Mammary epithelial cell (primary cell): ENCODE measurements at regions of chr7 and their contacts with region 1.

Region 1: DNA sequence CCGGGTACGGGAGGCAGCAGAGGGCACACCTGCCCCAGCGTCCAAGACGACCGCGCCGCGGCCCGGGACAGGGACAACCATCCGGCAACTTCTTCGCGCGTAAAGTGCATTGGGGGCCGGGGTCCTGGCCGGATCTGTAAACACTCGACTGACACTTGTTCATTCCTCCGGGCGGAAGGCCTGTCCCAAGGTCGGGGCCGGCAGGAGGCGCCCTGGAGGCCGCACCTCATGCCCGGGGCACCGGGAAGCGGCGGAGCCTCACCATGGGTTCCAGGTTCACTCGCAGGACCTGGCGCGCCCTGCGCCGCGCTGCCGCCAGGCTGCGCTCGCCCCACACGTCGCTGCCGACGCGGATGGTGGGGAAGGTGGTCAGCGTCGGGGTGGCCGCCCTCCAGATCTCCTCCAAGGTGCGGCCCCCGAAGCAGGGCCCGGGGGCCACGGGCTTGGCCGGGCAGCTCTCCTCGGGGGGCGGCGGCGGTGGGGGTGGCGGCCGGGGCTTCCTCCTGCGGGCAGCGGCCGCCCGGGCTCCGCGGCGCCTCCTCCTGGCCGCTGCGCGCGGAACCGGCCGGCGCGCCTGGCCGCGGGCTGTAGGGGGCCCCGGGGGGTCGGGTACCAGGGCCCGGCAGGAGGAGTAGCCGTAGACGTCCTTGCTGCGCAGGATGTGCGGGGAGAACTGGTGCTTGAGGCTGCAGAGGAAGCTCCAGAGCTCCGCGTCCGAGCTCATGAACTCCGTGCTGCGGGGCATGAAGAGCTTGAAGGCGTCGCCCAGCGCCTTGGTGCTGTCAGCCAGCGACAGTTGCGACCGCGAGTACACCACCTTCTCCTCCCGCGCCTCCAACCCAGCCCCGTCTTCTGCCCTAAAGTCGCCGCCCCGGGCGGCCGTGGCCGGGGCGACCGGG is 746 bp downstream of the CCDC71L start:
- DNase-seq: peak; percentile 74
- H3K4me3 ChIP-seq: peak overlapping the region; percentile 74 to 99 (median 90)
- H3K27ac ChIP-seq: peak overlapping the region; percentile 81
- H3K4me1 ChIP-seq: peaks cover 6% of the 10 kb centered on the region
- H3K27me3 ChIP-seq: no peaks in the 10 kb centered on the region
- CTCF ChIP-seq: peak; percentile 75 to 93

Region 2: GRCh38 chr7:106542550-106543220 is 117.5 kb before region 1 on chr7:
- CTCF ChIA-PET with region 1: interaction called, 12 read pairs
- dilution Hi-C with region 1: no loop called
- in situ Hi-C with region 1: loop called in 1 of 2 experiments (anchors 5 kb)
- intact Hi-C with region 1: loop called (anchors 1 kb)
- DNase-seq: peak; percentile 70
- H3K4me3 ChIP-seq: no peak overlapping the region
- H3K27ac ChIP-seq: no peak overlapping the region
- H3K4me1 ChIP-seq: no peaks in the 10 kb centered on the region
- H3K27me3 ChIP-seq: no peaks in the 10 kb centered on the region
- CTCF ChIP-seq: peak; percentile 68 to 81

Region 3: DNA sequence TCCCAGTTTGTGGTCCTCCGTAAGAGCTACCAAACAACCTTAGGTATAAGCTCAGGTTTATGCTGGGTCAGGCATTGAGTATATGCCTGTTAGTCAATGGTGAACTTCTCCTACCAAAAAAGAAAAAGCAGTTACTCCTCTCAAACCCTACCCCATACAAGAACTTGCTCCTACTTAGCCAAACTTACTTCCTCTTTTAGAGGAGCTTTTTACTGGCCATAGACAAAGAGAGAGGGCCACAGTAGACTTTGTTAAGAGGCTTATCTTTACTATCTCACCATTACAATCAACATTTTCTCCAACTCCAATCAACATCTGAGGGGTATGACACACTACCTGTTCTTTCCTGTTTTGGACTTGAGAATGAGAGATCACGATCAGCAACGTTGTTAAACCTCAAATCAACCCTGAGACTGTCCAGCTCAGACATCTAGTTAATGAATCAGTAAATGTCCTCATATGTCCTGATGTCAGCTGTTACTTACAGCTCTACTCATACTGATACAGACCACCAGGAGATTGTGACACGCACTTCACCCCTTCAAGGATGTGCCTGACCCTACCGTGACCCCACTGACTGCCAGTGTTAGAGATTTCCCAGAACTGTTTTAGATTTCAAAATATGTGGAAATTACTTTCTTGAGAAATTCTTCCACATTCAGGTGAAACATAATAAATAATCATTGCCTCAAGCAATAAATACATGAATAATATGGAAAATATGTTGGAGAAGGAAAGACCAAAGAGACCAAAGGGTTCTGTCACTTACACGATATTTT is 19.1 kb after region 1 on chr7:
- CTCF ChIA-PET with region 1: no interaction called
- dilution Hi-C with region 1: no loop called
- in situ Hi-C with region 1: no loop called
- intact Hi-C with region 1: loop called (anchors 1 kb)
- DNase-seq: peak; percentile 79
- H3K4me3 ChIP-seq: no peak overlapping the region
- H3K27ac ChIP-seq: peak overlapping the region; percentile 9
- H3K4me1 ChIP-seq: peaks cover 17% of the 10 kb centered on the region
- H3K27me3 ChIP-seq: no peaks in the 10 kb centered on the region
- CTCF ChIP-seq: no peak

Region 4: DNA sequence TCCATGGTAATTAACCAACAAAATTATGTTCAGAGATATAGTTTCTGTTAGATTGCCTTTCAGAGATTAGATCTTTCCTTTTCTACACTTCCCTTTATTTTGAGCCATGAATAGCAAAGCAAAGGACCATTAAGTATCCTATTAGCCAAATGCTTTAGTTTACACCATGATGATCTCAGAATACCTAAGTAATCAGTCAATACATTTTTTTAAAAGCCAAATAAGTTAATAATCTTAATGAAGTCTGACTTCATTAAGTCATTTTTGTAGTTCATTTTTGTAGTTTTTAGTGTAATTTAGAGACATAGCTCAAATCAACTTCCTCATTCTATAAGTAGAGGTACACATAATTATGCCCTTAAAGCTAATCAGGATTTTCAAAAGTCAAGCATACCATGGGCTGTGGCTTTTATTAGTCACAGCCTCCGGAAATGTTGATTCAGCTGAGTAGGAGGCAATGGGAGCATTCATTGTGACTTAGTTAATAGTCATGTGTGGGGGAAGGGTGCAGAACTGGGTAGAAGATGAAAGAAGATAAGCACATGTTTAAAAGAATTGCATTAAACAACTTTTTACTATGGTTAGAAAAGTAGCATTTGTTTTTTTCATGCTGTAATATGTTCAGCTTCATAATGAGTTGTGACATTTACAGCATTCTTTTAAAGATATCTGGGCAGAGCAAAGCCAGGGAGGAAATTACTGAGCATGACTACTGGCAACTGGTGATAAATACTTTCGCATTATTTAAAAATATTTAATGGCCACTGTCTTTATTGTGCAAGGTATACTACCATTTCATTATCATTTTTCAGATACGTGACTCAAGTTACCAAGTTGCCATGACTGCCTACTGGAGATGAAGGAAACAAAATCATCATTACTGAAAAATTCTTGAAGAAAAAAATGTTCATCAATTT is 58.0 kb after region 1 on chr7:
- CTCF ChIA-PET with region 1: interaction called, 5 read pairs
- dilution Hi-C with region 1: no loop called
- in situ Hi-C with region 1: no loop called
- intact Hi-C with region 1: loop called (anchors 1 kb)
- DNase-seq: peak; percentile 95
- H3K4me3 ChIP-seq: no peak overlapping the region
- H3K27ac ChIP-seq: peak overlapping the region; percentile 98
- H3K4me1 ChIP-seq: peaks cover 23% of the 10 kb centered on the region
- H3K27me3 ChIP-seq: no peaks in the 10 kb centered on the region
- CTCF ChIP-seq: no peak

Region 5: GRCh38 chr7:106731187-106731586 is 71.0 kb after region 1 on chr7:
- CTCF ChIA-PET with region 1: interaction called, 3 read pairs
- dilution Hi-C with region 1: loop called (anchors 5 kb)
- in situ Hi-C with region 1: loop called (anchors 5 kb)
- intact Hi-C with region 1: loop called (anchors 1 kb)
- DNase-seq: no peak
- H3K4me3 ChIP-seq: no peak overlapping the region
- H3K27ac ChIP-seq: peak overlapping the region; percentile 87
- H3K4me1 ChIP-seq: peaks cover 30% of the 10 kb centered on the region
- H3K27me3 ChIP-seq: no peaks in the 10 kb centered on the region
- CTCF ChIP-seq: no peak

Region 6: GRCh38 chr7:106982415-106982814 is 322.2 kb after region 1 on chr7:
- CTCF ChIA-PET with region 1: no interaction called
- dilution Hi-C with region 1: no loop called
- in situ Hi-C with region 1: no loop called
- intact Hi-C with region 1: no loop called
- DNase-seq: no peak
- H3K4me3 ChIP-seq: no peak overlapping the region
- H3K27ac ChIP-seq: no peak overlapping the region
- H3K4me1 ChIP-seq: no peaks in the 10 kb centered on the region
- H3K27me3 ChIP-seq: no peaks in the 10 kb centered on the region
- CTCF ChIP-seq: no peak